B cell (primary cell): ENCODE measurements at regions of chr14 and their contacts with region 1.

Region 1: DNA sequence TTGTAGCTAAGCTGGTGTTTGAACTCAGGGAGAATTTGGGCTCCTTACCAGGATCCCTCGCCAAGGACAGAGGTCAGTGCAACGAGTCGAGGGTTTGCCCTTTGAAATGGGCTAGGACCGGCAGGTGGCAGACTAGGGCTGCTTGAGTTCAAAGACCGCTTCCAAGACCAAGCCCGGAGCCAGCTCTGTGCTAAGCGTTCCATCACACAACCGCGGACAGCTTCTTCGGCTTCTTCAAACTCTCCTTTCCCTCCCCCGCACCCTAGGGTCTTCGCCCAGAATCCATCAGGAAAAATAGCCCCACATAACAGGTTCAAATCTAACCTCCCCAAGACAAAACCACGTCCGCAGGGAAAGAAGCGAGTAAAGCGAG is 705 bp upstream of the FLVCR2 start:
- DNase-seq: peak; percentile 81
- ATAC-seq: peak; percentile 88
- H3K4me3 ChIP-seq: peak overlapping the region; percentile 51 to 83 (median 65)
- H3K4me3 Mint-ChIP-seq: peak overlapping the region; percentile 99
- H3K27ac ChIP-seq: no peak overlapping the region
- H3K27ac Mint-ChIP-seq: peak overlapping the region; percentile 77
- H3K4me1 ChIP-seq: peaks cover 7 to 20% of the 10 kb centered on the region in 2 donors
- H3K4me1 Mint-ChIP-seq: peaks cover 21% of the 10 kb centered on the region
- H3K27me3 ChIP-seq: peaks cover 0 to 15% (median 0%) of the 10 kb centered on the region in 4 experiments
- H3K27me3 Mint-ChIP-seq: no peaks in the 10 kb centered on the region
- CTCF ChIP-seq: peak; percentile 84

Region 2: DNA sequence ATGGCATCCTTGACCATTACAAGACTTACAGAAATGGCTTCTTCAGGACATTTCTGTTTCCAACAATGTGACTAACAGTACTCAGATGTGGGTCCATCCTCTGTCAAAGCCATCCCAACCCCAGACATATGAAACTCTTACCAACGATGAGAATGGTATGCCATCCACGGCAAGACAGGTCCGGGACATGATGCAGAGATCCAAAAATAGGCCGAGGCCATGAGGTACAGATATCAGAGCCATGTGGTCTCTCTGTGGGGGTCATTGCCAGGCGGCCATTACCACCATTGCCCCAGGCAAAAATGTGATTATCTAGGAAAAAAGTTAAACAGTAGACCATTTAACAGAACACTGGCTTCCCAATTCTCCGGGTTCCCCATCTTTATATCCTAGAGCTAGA is 480.8 kb before region 1 on chr14:
- CTCF ChIA-PET with region 1: no interaction called
- POLR2A ChIA-PET with region 1: no interaction called
- intact Hi-C with region 1: no loop called
- DNase-seq: no peak
- ATAC-seq: no peak
- H3K4me3 ChIP-seq: no peak overlapping the region
- H3K4me3 Mint-ChIP-seq: no peak overlapping the region
- H3K27ac ChIP-seq: no peak overlapping the region
- H3K27ac Mint-ChIP-seq: no peak overlapping the region
- H3K4me1 ChIP-seq: peaks cover 3 to 6% of the 10 kb centered on the region in 2 donors
- H3K4me1 Mint-ChIP-seq: peaks cover 6% of the 10 kb centered on the region
- H3K27me3 ChIP-seq: no peaks in the 10 kb centered on the region
- H3K27me3 Mint-ChIP-seq: no peaks in the 10 kb centered on the region
- CTCF ChIP-seq: no peak

Region 3: DNA sequence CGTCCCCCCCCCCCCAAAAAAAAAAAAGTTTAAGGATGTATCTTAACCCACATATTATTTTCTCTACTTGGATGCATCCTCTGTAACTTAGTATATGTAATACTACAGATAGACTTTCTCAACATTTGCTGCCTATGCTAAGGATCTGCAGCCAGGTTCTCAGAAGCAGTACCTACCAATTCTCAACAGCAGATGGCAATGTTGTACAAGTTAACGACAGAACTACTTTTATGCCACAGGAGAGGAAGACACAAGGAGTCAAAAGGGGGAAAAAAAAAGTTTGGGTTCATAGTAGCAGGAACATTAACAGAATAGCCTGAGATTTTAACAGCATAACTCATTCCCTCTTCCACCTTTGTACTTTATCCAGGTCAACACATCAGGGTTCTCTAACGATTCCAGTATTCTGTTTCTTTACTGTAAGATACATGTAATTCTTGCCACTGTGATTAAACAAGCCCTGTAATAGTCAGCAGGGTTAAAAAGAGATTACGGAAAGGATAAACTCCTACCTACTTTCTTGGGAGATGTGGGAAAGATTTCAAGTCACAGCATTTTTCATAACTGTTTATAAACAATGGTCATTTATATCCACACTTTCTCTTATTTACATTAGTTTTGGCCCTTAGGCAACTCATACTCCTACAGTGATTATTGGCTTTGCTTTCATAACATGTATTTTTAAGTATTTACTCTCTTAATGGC is 445.2 kb before region 1 on chr14:
- CTCF ChIA-PET with region 1: interaction called, 3 read pairs
- POLR2A ChIA-PET with region 1: no interaction called
- intact Hi-C with region 1: loop called (anchors 1 kb)
- DNase-seq: peak; percentile 85
- ATAC-seq: peak; percentile 95
- H3K4me3 ChIP-seq: no peak overlapping the region
- H3K4me3 Mint-ChIP-seq: no peak overlapping the region
- H3K27ac ChIP-seq: peak overlapping the region in 1 of 2 donors; percentile 49
- H3K27ac Mint-ChIP-seq: peak overlapping the region; percentile 3
- H3K4me1 ChIP-seq: peaks cover 4 to 5% of the 10 kb centered on the region in 2 donors
- H3K4me1 Mint-ChIP-seq: peaks cover 14% of the 10 kb centered on the region
- H3K27me3 ChIP-seq: no peaks in the 10 kb centered on the region
- H3K27me3 Mint-ChIP-seq: no peaks in the 10 kb centered on the region
- CTCF ChIP-seq: peak; percentile 78

Region 4: GRCh38 chr14:75615200-75615599 is 37.5 kb after region 1 on chr14:
- CTCF ChIA-PET with region 1: interaction called, 12 read pairs
- POLR2A ChIA-PET with region 1: no interaction called
- intact Hi-C with region 1: no loop called
- DNase-seq: peak; percentile 60
- ATAC-seq: peak; percentile 85
- H3K4me3 ChIP-seq: no peak overlapping the region
- H3K4me3 Mint-ChIP-seq: no peak overlapping the region
- H3K27ac ChIP-seq: no peak overlapping the region
- H3K27ac Mint-ChIP-seq: no peak overlapping the region
- H3K4me1 ChIP-seq: peaks cover 8 to 9% of the 10 kb centered on the region in 2 donors
- H3K4me1 Mint-ChIP-seq: peaks cover 14% of the 10 kb centered on the region
- H3K27me3 ChIP-seq: peaks cover 0 to 3% (median 1%) of the 10 kb centered on the region in 4 experiments
- H3K27me3 Mint-ChIP-seq: no peaks in the 10 kb centered on the region
- CTCF ChIP-seq: no peak

Region 5: DNA sequence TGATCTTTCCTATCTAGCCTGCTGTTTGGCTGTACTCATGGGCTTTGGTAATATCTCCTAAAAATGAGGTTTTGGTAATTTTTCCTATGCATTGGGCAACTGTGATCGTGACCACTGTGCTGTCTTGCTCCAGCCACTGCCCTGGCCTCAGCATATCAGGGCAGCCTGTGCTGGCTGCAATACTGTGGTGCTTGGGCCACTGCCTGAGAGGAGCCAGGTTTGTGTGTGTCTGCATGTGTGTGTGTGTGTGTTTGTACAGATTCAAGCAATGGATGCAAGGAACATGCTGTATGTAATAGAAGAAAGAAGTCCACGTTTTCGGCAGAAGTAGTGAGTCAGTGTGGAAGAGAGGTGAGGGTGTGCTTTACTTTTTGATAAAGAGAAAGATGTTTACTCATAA is 69.9 kb after region 1 on chr14:
- CTCF ChIA-PET with region 1: interaction called, 447 read pairs
- POLR2A ChIA-PET with region 1: no interaction called
- intact Hi-C with region 1: no loop called
- DNase-seq: no peak
- ATAC-seq: no peak
- H3K4me3 ChIP-seq: no peak overlapping the region
- H3K4me3 Mint-ChIP-seq: no peak overlapping the region
- H3K27ac ChIP-seq: no peak overlapping the region
- H3K27ac Mint-ChIP-seq: peak overlapping the region; percentile 23
- H3K4me1 ChIP-seq: no peaks in the 10 kb centered on the region
- H3K4me1 Mint-ChIP-seq: no peaks in the 10 kb centered on the region
- H3K27me3 ChIP-seq: no peaks in the 10 kb centered on the region
- H3K27me3 Mint-ChIP-seq: no peaks in the 10 kb centered on the region
- CTCF ChIP-seq: no peak

Region 6: DNA sequence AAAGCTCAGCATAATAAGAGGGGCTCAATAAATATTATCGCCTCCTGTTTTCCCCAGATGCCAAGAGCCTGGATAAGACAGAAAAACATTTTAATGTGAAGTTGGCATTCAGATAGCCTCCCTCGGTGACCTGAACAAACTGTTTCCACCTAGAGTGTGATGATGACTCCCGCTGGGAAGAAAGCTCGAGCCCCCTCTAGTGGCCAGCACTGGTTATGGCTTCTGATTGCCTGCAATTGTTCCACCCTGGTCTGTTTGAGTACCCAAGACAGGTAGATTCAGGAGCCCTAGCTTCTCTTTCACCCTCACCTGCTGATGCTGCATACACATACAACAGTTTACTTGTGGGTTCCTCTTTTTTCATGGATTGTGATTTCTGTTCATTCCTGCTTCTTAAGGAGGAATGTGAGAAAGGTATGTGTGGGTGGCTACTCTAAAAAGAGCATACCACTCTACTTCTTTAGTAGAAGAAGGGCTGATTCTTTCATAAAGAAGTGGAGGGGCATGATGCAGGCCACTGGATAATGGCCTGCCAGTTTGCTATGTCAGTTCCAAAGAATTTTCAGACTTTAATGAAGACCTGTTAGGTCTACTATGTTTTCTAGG is 76.5 kb after region 1 on chr14:
- CTCF ChIA-PET with region 1: interaction called, 447 read pairs
- POLR2A ChIA-PET with region 1: no interaction called
- intact Hi-C with region 1: loop called (anchors 1 kb)
- DNase-seq: peak; percentile 82
- ATAC-seq: peak; percentile 96
- H3K4me3 ChIP-seq: no peak overlapping the region
- H3K4me3 Mint-ChIP-seq: no peak overlapping the region
- H3K27ac ChIP-seq: no peak overlapping the region
- H3K27ac Mint-ChIP-seq: no peak overlapping the region
- H3K4me1 ChIP-seq: no peaks in the 10 kb centered on the region
- H3K4me1 Mint-ChIP-seq: peaks cover 4% of the 10 kb centered on the region
- H3K27me3 ChIP-seq: no peaks in the 10 kb centered on the region
- H3K27me3 Mint-ChIP-seq: no peaks in the 10 kb centered on the region
- CTCF ChIP-seq: peak; percentile 94

Region 7: GRCh38 chr14:75660630-75661494 is 83.1 kb after region 1 on chr14 and contains the starts of genes ERG28 and TTLL5:
- CTCF ChIA-PET with region 1: interaction called, 447 read pairs
- POLR2A ChIA-PET with region 1: interaction called, 5 read pairs
- intact Hi-C with region 1: no loop called
- DNase-seq: peak; percentile 98
- ATAC-seq: peak; percentile 94
- H3K4me3 ChIP-seq: peak within 1 kb of the TSS; percentile 73 to 95 (median 85)
- H3K4me3 Mint-ChIP-seq: peak within 1 kb of the TSS; percentile 95
- H3K27ac ChIP-seq: peak within 1 kb of the TSS; percentile 80 to 96
- H3K27ac Mint-ChIP-seq: peak within 1 kb of the TSS; percentile 96
- H3K4me1 ChIP-seq: peaks cover 14 to 15% of the 10 kb centered on the region in 2 donors
- H3K4me1 Mint-ChIP-seq: peaks cover 27% of the 10 kb centered on the region
- H3K27me3 ChIP-seq: no peaks in the 10 kb centered on the region
- H3K27me3 Mint-ChIP-seq: no peaks in the 10 kb centered on the region
- CTCF ChIP-seq: no peak
- total RNA-seq, gene ERG28: 11.7 and 13.7 TPM in 2 replicates
- total RNA-seq, gene TTLL5: 47.0 and 50.9 TPM in 2 replicates

Region 8: GRCh38 chr14:75709207-75709812 is 131.6 kb after region 1 on chr14:
- CTCF ChIA-PET with region 1: interaction called, 10 read pairs
- POLR2A ChIA-PET with region 1: no interaction called
- intact Hi-C with region 1: no loop called
- DNase-seq: peak; percentile 75
- ATAC-seq: peak; percentile 51
- H3K4me3 ChIP-seq: no peak overlapping the region
- H3K4me3 Mint-ChIP-seq: no peak overlapping the region
- H3K27ac ChIP-seq: no peak overlapping the region
- H3K27ac Mint-ChIP-seq: no peak overlapping the region
- H3K4me1 ChIP-seq: no peaks in the 10 kb centered on the region
- H3K4me1 Mint-ChIP-seq: no peaks in the 10 kb centered on the region
- H3K27me3 ChIP-seq: no peaks in the 10 kb centered on the region
- H3K27me3 Mint-ChIP-seq: no peaks in the 10 kb centered on the region
- CTCF ChIP-seq: peak; percentile 86